Ascending aorta (tissue), 2 donors: ENCODE measurements at regions of chr7 and their contacts with region 1.

Region 1: GRCh38 chr7:76020031-76020714 is 25.8 kb upstream of the TMEM120A start:
- DNase-seq: peak in 1 of 2 donors; percentile 87
- H3K4me3 ChIP-seq: no peak overlapping the region
- H3K27ac ChIP-seq: no peak overlapping the region
- H3K4me1 ChIP-seq: no peaks in the 10 kb centered on the region
- H3K27me3 ChIP-seq: no peaks in the 10 kb centered on the region
- CTCF ChIP-seq: peak; percentile 83 to 93 (median 89)

Region 2: DNA sequence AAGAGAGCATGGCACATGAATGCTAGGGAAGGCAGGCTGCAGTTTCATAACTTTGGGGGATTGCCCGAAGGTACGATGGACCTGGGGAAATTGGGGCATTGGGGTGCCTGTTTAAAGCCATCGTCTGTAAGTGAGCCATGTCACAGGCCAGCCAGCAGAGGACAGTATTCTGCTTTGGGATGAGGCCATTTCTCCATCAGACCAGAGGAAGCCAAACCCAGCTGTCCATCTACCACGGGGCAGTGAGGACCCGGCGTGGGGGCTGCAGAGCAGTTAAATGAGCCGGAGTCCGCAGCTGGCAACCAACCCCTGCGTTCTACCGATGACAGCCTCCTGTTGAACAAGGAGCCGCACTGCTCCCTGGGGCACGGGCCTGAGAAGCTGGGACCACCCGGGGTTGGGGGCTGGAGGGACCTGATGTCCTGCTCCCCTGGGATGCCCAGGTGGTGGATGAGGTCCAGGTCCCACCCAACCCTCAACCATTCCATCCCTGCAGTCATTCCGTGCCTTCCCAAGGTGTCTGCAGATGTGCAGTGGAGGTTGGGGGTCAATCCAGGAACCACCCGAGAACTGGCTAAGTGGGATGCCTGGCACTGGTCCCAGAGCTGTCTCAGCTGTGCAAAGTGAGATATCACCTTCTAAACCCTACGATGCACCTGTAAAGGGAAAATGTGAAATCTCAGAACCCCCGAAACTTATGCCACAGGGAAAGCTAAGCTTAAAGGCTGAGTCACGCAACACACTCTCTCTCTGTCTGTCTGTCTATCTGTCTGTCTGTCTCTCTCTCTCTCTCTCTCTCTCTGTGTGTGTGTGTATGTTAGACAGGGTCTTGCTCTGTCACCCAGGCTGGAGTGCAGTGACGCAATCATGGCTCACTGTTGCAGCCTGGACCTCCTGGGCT is 153.4 kb before region 1 on chr7:
- intact Hi-C with region 1: loop called (anchors 1 kb)
- DNase-seq: peak in 1 of 2 donors; percentile 74
- H3K4me3 ChIP-seq: no peak overlapping the region
- H3K27ac ChIP-seq: no peak overlapping the region
- H3K4me1 ChIP-seq: peaks cover 0 to 6% of the 10 kb centered on the region in 2 donors
- H3K27me3 ChIP-seq: no peaks in the 10 kb centered on the region
- CTCF ChIP-seq: peak; percentile 87 to 94 (median 90)

Region 3: DNA sequence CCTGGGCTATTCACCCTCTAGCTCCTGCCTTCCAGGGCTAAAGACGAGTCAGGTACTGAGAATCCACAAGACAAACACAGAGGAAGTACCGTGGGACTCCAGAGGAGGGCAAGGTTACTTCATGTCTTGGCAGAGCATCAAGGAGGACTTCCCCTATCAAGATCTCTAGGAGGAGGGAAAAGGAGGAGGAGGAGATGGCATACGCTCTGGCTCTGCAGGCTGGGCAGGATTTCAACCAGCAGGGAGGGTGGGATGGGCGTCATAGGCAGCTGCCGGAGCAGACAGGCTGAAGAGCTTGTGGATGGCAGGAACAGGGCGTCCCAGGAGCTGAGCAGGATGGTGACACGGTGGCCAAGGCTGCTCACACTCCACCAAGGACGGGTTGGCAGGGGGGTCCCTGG is 49.1 kb after region 1 on chr7:
- intact Hi-C with region 1: no loop called
- DNase-seq: no peak
- H3K4me3 ChIP-seq: no peak overlapping the region
- H3K27ac ChIP-seq: no peak overlapping the region
- H3K4me1 ChIP-seq: no peaks in the 10 kb centered on the region
- H3K27me3 ChIP-seq: no peaks in the 10 kb centered on the region
- CTCF ChIP-seq: no peak

Region 4: GRCh38 chr7:76515999-76516443 is 495.8 kb after region 1 on chr7:
- intact Hi-C with region 1: no loop called
- DNase-seq: no peak
- H3K4me3 ChIP-seq: no peak overlapping the region
- H3K27ac ChIP-seq: no peak overlapping the region
- H3K4me1 ChIP-seq: no peaks in the 10 kb centered on the region
- H3K27me3 ChIP-seq: no peaks in the 10 kb centered on the region
- CTCF ChIP-seq: peak in 1 of 3 experiments; percentile 74